ENCODE measurements at regions of chr4 and their contacts with region 1.

Region 1: GRCh38 chr4:13654158-13654797 is 26.8 kb upstream of the BOD1L1 start:
- DNase-seq: peak; percentile 63 to 76 (median 68)
- ATAC-seq: peak; percentile 99
- H3K4me3 ChIP-seq: peak overlapping the region; percentile 29
- H3K27ac ChIP-seq: no peak overlapping the region
- H3K4me1 ChIP-seq: peaks cover 0 to 7% of the 10 kb centered on the region in 2 experiments; a peak in 2 of 5 replicates
- H3K27me3 ChIP-seq: no peaks in the 10 kb centered on the region; a peak in 1 of 5 replicates
- CTCF ChIP-seq: peak; percentile 73 to 83 (median 76)
- EP300 ChIP-seq: no peak
- POLR2A ChIP-seq: no peak
- RAD21 ChIP-seq: peak; percentile 41 to 49

Region 2: GRCh38 chr4:12729384-12729783 is 924.9 kb before region 1 on chr4:
- CTCF ChIA-PET with region 1: no interaction called
- POLR2A ChIA-PET with region 1: no interaction called
- in situ Hi-C with region 1: no loop called
- intact Hi-C with region 1: loop called (anchors 2 kb)
- DNase-seq: peak; percentile 6 to 47 (median 31)
- ATAC-seq: 0 out of 3 replicates have a peak, but pooled peaks have one; percentile 42
- H3K4me3 ChIP-seq: no peak overlapping the region
- H3K27ac ChIP-seq: no peak overlapping the region
- H3K4me1 ChIP-seq: no peaks in the 10 kb centered on the region
- H3K27me3 ChIP-seq: no peaks in the 10 kb centered on the region
- CTCF ChIP-seq: peak in 2 of 3 experiments; percentile 38 to 52; a peak in 4 of 6 replicates
- EP300 ChIP-seq: no peak
- POLR2A ChIP-seq: no peak
- RAD21 ChIP-seq: peak; percentile 38 to 47

Region 3: GRCh38 chr4:12852338-12853307 is 801.7 kb before region 1 on chr4:
- CTCF ChIA-PET with region 1: interaction called, 6 read pairs
- POLR2A ChIA-PET with region 1: no interaction called
- in situ Hi-C with region 1: no loop called
- intact Hi-C with region 1: loop called (anchors 2 kb)
- DNase-seq: peak in 2 of 4 experiments; percentile 18 to 37
- ATAC-seq: peak; percentile 88
- H3K4me3 ChIP-seq: no peak overlapping the region
- H3K27ac ChIP-seq: no peak overlapping the region
- H3K4me1 ChIP-seq: no peaks in the 10 kb centered on the region
- H3K27me3 ChIP-seq: no peaks in the 10 kb centered on the region
- CTCF ChIP-seq: peak; percentile 33 to 63 (median 40); a peak in 4 of 6 replicates
- EP300 ChIP-seq: no peak
- POLR2A ChIP-seq: no peak
- RAD21 ChIP-seq: peak; percentile 84

Region 4: GRCh38 chr4:13728761-13729160 is 74.5 kb after region 1 on chr4:
- CTCF ChIA-PET with region 1: no interaction called
- POLR2A ChIA-PET with region 1: no interaction called
- in situ Hi-C with region 1: no loop called
- intact Hi-C with region 1: no loop called
- DNase-seq: no peak
- ATAC-seq: no peak
- H3K4me3 ChIP-seq: no peak overlapping the region
- H3K27ac ChIP-seq: no peak overlapping the region
- H3K4me1 ChIP-seq: no peaks in the 10 kb centered on the region
- H3K27me3 ChIP-seq: no peaks in the 10 kb centered on the region
- CTCF ChIP-seq: no peak
- EP300 ChIP-seq: no peak
- POLR2A ChIP-seq: no peak
- RAD21 ChIP-seq: no peak

Region 5: DNA sequence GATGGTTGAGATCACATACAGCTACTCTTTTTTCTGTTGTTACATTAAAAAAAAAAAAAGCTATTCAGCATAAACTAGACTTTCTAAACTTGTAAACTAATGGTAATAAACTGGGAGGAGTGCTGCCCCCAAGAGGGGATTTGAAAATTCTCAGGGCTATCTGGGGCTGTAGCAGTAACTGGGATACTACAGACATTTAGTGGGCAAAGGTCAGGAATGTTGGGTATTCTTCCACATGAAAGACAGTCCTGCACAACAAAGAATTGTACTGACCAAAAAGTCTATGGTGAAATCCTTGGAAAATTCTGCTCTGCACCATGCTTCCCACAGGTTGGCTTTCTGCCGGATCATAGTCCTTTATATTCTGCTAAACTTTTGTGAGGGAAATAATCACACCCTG is 205.8 kb after region 1 on chr4:
- CTCF ChIA-PET with region 1: no interaction called
- POLR2A ChIA-PET with region 1: no interaction called
- in situ Hi-C with region 1: no loop called
- intact Hi-C with region 1: no loop called
- DNase-seq: no peak
- ATAC-seq: no peak
- H3K4me3 ChIP-seq: no peak overlapping the region
- H3K27ac ChIP-seq: no peak overlapping the region
- H3K4me1 ChIP-seq: no peaks in the 10 kb centered on the region
- H3K27me3 ChIP-seq: no peaks in the 10 kb centered on the region
- CTCF ChIP-seq: no peak
- EP300 ChIP-seq: no peak
- POLR2A ChIP-seq: no peak
- RAD21 ChIP-seq: no peak

Region 6: GRCh38 chr4:13881892-13882291 is 227.6 kb after region 1 on chr4:
- CTCF ChIA-PET with region 1: no interaction called
- POLR2A ChIA-PET with region 1: no interaction called
- in situ Hi-C with region 1: no loop called
- intact Hi-C with region 1: no loop called
- DNase-seq: no peak
- ATAC-seq: no peak
- H3K4me3 ChIP-seq: no peak overlapping the region
- H3K27ac ChIP-seq: no peak overlapping the region
- H3K4me1 ChIP-seq: no peaks in the 10 kb centered on the region
- H3K27me3 ChIP-seq: no peaks in the 10 kb centered on the region
- CTCF ChIP-seq: no peak
- EP300 ChIP-seq: no peak
- POLR2A ChIP-seq: no peak
- RAD21 ChIP-seq: no peak

Region 7: GRCh38 chr4:15162465-15163283 is 1508.4 kb after region 1 on chr4:
- CTCF ChIA-PET with region 1: no interaction called
- POLR2A ChIA-PET with region 1: no interaction called
- in situ Hi-C with region 1: no loop called
- intact Hi-C with region 1: loop called (anchors 10 kb)
- DNase-seq: peak in 2 of 4 experiments; percentile 27 to 32
- ATAC-seq: peak; percentile 86
- H3K4me3 ChIP-seq: no peak overlapping the region
- H3K27ac ChIP-seq: no peak overlapping the region
- H3K4me1 ChIP-seq: peaks cover 5 to 6% of the 10 kb centered on the region in 2 experiments; a peak in 2 of 5 replicates
- H3K27me3 ChIP-seq: no peaks in the 10 kb centered on the region
- CTCF ChIP-seq: peak; percentile 20 to 65 (median 38); a peak in 4 of 6 replicates
- EP300 ChIP-seq: no peak
- POLR2A ChIP-seq: no peak
- RAD21 ChIP-seq: peak; percentile 18 to 64; a peak in 3 of 4 replicates

Region 8: DNA sequence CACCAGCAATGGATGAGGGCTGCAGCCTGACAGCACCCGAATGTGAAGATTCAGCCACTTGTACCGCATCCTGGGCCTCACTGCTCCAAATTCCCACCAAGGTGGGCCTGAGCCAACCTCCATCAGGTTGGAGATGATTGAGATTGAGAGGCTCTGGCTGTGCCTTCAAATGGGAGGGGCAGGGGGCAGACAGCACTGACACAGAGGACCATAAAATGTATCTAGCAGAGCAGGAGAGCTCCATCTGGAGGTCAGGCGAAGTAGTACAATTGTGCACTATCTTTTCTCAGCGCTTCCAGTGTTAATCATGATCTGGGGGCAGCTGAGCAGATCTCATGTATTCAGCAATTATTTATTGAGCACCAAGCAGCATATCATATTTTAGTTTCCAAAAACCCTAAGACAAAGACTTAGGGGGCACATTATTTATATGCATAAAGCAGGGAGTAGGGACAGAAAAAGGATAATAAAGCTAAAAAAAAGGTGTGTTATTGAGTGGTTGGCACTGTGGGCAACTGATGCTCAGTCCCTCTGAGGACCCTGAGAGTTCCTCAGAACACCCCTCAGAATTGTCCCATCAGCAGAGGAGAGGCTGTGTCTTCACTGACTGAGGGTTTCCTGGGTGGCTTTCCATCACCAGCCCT is 1742.0 kb after region 1 on chr4:
- CTCF ChIA-PET with region 1: interaction called, 3 read pairs
- POLR2A ChIA-PET with region 1: no interaction called
- in situ Hi-C with region 1: no loop called
- intact Hi-C with region 1: loop called (anchors 10 kb)
- DNase-seq: peak; percentile 62 to 65 (median 64)
- ATAC-seq: peak; percentile 94
- H3K4me3 ChIP-seq: no peak overlapping the region
- H3K27ac ChIP-seq: no peak overlapping the region
- H3K4me1 ChIP-seq: no peaks in the 10 kb centered on the region
- H3K27me3 ChIP-seq: no peaks in the 10 kb centered on the region
- CTCF ChIP-seq: peak; percentile 74 to 76 (median 75)
- EP300 ChIP-seq: no peak
- POLR2A ChIP-seq: no peak
- RAD21 ChIP-seq: peak; percentile 41 to 70; a peak in 3 of 4 replicates

Region 9: DNA sequence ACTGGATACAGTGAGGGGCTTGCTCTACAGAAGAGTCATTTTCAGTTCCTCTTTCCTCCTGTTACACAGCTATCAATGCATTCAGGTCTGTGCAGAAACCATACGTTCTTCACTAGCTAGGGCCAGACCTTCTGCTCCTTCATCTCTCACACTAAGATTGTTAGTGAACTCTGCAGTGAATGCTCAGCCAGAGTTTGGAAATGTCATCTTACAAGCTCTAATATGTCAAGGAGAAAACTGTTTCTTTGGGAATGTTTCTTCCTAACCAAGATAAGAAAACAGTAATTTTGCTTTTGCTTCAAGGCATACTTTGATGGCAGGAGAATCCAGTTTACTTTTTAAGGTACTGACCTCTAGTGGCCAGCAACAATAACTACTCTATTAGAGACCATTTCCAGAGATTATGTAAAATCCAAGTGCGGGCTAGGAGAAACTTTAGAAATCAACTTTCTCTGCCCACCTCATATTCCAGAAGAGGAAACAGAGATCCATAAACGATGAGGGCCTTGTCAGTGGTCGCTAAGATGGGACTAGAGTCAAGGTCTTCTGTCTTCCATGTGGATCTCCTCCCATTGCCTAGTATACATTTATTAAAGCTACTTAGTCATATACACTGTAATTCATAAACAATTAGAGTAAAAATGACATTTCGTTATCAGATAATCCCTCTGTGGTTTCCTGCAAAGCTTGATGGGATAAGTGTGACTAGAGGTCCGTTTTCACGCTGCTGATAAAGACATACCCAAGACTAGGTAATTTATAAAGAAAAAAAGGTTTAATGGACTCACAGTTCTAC is 1803.3 kb after region 1 on chr4:
- CTCF ChIA-PET with region 1: interaction called, 3 read pairs
- POLR2A ChIA-PET with region 1: no interaction called
- in situ Hi-C with region 1: no loop called
- intact Hi-C with region 1: loop called (anchors 2 kb)
- DNase-seq: peak; percentile 27 to 37 (median 30)
- ATAC-seq: peak; percentile 86
- H3K4me3 ChIP-seq: no peak overlapping the region
- H3K27ac ChIP-seq: no peak overlapping the region
- H3K4me1 ChIP-seq: no peaks in the 10 kb centered on the region
- H3K27me3 ChIP-seq: no peaks in the 10 kb centered on the region
- CTCF ChIP-seq: peak; percentile 42 to 79 (median 66); a peak in 5 of 6 replicates
- EP300 ChIP-seq: no peak
- POLR2A ChIP-seq: no peak
- RAD21 ChIP-seq: peak; percentile 64 to 77